ENCODE measurements at regions of chr1 and their contacts with region 1.

Region 1: GRCh38 chr1:41416552-41417334 is 55.5 kb downstream of the FOXO6 start:
- DNase-seq: peak; percentile 47 to 53 (median 51)
- H3K4me3 ChIP-seq: no peak overlapping the region
- H3K4me3 Mint-ChIP-seq: no peak overlapping the region
- H3K27ac ChIP-seq: no peak overlapping the region
- H3K27ac Mint-ChIP-seq: no peak overlapping the region
- H3K4me1 ChIP-seq: no peaks in the 10 kb centered on the region
- H3K4me1 Mint-ChIP-seq: no peaks in the 10 kb centered on the region
- H3K27me3 ChIP-seq: no peaks in the 10 kb centered on the region
- H3K27me3 Mint-ChIP-seq: peaks cover 5 to 10% of the 10 kb centered on the region in 2 donors

Region 2: DNA sequence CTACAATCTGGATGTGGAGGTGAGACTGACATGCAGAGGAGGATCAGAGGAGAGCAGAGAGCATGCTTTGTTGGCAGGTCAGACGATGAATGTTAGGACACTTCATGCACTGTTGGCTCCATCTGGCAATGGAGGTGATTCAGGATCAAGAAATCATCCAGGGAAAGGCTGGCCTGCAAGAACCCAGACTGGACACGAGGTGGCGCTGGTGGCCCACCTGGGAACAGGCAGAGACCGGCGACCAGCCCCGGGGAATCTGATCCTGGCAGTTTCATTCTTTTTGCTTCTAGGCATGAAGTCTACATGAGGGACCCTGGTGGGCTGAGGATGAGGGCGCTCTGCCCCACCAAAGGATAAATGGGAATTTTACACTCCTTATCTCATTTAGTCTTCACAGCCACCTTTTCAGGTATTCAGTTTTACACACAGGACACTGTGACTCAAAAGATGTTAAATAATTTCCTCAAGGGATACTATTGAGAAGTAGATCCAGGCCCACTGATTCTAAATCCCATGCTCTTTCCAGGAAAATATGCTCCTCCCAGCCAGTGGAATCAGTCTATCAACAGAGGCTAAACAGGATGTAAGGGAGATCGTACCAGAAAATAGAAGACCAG is 148.5 kb before region 1 on chr1:
- CTCF ChIA-PET with region 1: interaction called, 35 read pairs
- POLR2A ChIA-PET with region 1: no interaction called
- intact Hi-C with region 1: loop called (anchors 1 kb)
- DNase-seq: peak; percentile 54 to 62 (median 56)
- H3K4me3 ChIP-seq: no peak overlapping the region
- H3K4me3 Mint-ChIP-seq: no peak overlapping the region
- H3K27ac ChIP-seq: no peak overlapping the region
- H3K27ac Mint-ChIP-seq: peak overlapping the region in 1 of 7 donors; percentile 39
- H3K4me1 ChIP-seq: no peaks in the 10 kb centered on the region
- H3K4me1 Mint-ChIP-seq: peaks cover 0 to 6% (median 1%) of the 10 kb centered on the region in 4 donors
- H3K27me3 ChIP-seq: no peaks in the 10 kb centered on the region
- H3K27me3 Mint-ChIP-seq: peaks cover 6% of the 10 kb centered on the region in 2 donors

Region 3: GRCh38 chr1:41282679-41283317 is 133.9 kb before region 1 on chr1:
- CTCF ChIA-PET with region 1: interaction called, 32 read pairs
- POLR2A ChIA-PET with region 1: no interaction called
- intact Hi-C with region 1: loop called (anchors 1 kb)
- DNase-seq: peak in 2 of 5 donors; percentile 2 to 6
- H3K4me3 ChIP-seq: no peak overlapping the region
- H3K4me3 Mint-ChIP-seq: no peak overlapping the region
- H3K27ac ChIP-seq: no peak overlapping the region
- H3K27ac Mint-ChIP-seq: no peak overlapping the region
- H3K4me1 ChIP-seq: no peaks in the 10 kb centered on the region
- H3K4me1 Mint-ChIP-seq: peaks cover 0 to 2% (median 0%) of the 10 kb centered on the region in 4 donors
- H3K27me3 ChIP-seq: no peaks in the 10 kb centered on the region
- H3K27me3 Mint-ChIP-seq: peaks cover 28 to 31% of the 10 kb centered on the region in 2 donors

Region 4: DNA sequence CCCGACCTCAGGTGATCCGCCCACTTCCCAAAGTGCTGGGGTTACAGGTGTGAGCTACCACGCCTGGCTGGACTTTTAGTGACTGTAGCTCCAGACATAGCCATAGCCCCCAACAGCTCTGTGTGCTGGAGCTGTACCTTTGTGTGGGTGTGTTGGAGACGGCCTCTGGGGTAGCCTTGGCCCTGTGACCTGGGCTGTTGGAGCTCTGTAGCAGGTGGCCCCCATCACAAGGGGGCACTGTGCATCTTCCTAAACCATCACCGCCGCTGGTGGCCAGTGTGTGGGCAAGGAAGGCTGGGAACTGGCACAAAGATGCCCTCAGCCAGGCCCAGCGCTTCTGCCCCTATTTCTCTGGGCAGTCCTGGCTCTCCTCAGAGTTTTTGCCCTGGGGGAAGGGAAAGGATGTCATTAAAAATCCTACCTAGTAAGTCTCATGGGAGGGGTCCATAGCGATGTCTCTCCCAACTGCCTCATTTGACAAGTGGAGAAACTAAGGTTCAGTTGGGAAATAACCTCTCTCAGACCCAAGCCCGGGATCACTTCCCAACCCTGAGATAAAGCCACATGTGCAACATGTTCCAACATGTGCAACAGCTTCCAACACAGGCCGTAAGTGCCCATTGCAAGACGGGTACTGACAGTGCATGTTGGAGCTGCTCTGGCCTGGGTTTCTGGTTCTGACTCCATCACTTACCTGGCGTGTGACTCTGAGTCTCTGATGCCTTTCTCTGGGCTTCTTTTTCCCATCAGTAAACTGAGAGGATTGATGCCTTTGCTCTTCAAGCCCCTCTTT is 93.7 kb before region 1 on chr1:
- CTCF ChIA-PET with region 1: interaction called, 14 read pairs
- POLR2A ChIA-PET with region 1: no interaction called
- intact Hi-C with region 1: loop called (anchors 1 kb)
- DNase-seq: peak in 2 of 5 donors; percentile 4 to 5
- H3K4me3 ChIP-seq: no peak overlapping the region
- H3K4me3 Mint-ChIP-seq: no peak overlapping the region
- H3K27ac ChIP-seq: no peak overlapping the region
- H3K27ac Mint-ChIP-seq: no peak overlapping the region
- H3K4me1 ChIP-seq: no peaks in the 10 kb centered on the region
- H3K4me1 Mint-ChIP-seq: no peaks in the 10 kb centered on the region
- H3K27me3 ChIP-seq: no peaks in the 10 kb centered on the region
- H3K27me3 Mint-ChIP-seq: peaks cover 0 to 6% of the 10 kb centered on the region in 2 donors

Region 5: DNA sequence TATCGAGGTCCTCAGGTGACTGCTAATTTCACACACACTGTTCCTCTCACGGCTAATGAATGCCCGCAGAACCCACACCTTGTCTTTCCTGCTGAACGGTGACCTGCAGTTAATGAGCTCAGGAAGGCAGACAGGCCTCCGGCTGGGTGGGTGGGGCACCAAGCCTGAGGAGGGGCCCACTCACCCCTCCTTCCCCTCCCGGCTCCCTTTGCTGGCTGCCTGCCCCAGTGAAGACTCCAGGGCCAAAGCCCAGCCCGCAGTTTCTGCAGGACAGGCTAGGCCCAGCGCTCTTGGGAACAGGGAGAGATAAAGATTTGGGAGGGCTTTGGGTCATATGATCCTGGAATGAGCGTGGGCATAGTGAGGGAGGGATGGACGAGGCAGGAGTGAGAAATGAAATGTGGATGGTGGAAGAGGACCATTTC is 29.1 kb before region 1 on chr1:
- CTCF ChIA-PET with region 1: no interaction called
- POLR2A ChIA-PET with region 1: no interaction called
- intact Hi-C with region 1: no loop called
- DNase-seq: no peak
- H3K4me3 ChIP-seq: no peak overlapping the region
- H3K4me3 Mint-ChIP-seq: no peak overlapping the region
- H3K27ac ChIP-seq: no peak overlapping the region
- H3K27ac Mint-ChIP-seq: no peak overlapping the region
- H3K4me1 ChIP-seq: peaks cover 10% of the 10 kb centered on the region
- H3K4me1 Mint-ChIP-seq: peaks cover 6 to 11% (median 8%) of the 10 kb centered on the region in 4 donors
- H3K27me3 ChIP-seq: peaks cover 3% of the 10 kb centered on the region
- H3K27me3 Mint-ChIP-seq: peaks cover 29 to 35% of the 10 kb centered on the region in 2 donors

Measured in CD4-positive, alpha-beta memory T cell (primary cell).